HEK293 (cell line): ENCODE measurements at regions of chr1 and their contacts with region 1.

Region 1: GRCh38 chr1:95035536-95035935 is 37.2 kb downstream of the ALG14 start:
- H3K4me3 ChIP-seq: no peak overlapping the region
- H3K27ac ChIP-seq: no peak overlapping the region
- H3K4me1 ChIP-seq: no peaks in the 10 kb centered on the region
- CTCF ChIP-seq: no peak

Region 2: DNA sequence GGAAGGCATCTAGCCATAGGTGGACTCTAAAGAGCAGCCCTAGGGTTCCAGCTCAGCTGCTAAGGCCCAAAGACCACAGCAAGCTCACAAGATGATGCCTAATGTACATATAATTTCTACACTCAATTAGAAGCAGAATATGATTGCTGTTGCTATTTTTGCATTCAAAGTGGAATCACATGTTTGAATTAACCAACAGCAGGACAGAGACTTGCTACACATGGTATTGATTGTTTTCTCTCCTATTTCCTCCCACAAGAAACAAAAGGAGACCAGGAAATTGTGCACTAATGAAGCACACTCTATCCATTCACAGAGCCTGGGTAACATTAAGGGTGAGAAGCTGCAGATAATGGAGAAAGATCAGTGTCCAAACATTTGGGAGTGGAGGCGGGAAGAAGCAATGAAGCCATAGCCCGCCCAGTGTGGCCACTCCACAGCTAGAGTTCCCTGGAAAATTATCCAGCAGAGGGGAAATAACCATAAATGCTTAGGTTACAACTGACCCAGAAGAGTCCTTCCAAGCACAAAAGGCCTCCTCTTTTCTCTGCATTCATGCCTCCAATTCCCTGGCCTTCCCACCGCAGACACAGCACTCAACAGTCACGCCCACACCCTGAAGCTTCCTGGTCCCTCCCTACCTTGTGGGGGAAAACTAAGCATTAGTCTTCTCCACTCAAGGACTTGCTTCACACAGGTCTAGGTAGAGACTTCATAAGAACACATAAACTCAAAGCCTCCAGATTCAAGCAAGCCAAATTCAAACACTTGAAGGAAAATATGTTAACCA is 116.1 kb before region 1 on chr1:
- CTCF ChIA-PET with region 1: interaction called, 15 read pairs
- POLR2A ChIA-PET with region 1: no interaction called
- H3K4me3 ChIP-seq: no peak overlapping the region
- H3K27ac ChIP-seq: no peak overlapping the region
- H3K4me1 ChIP-seq: peaks cover 18% of the 10 kb centered on the region
- CTCF ChIP-seq: no peak

Region 3: GRCh38 chr1:95095833-95096217 is 60.3 kb after region 1 on chr1:
- CTCF ChIA-PET with region 1: no interaction called
- POLR2A ChIA-PET with region 1: no interaction called
- H3K4me3 ChIP-seq: no peak overlapping the region
- H3K27ac ChIP-seq: no peak overlapping the region
- H3K4me1 ChIP-seq: no peaks in the 10 kb centered on the region
- CTCF ChIP-seq: no peak